ENCODE measurements at regions of chr6 and their contacts with region 1.

Region 1: DNA sequence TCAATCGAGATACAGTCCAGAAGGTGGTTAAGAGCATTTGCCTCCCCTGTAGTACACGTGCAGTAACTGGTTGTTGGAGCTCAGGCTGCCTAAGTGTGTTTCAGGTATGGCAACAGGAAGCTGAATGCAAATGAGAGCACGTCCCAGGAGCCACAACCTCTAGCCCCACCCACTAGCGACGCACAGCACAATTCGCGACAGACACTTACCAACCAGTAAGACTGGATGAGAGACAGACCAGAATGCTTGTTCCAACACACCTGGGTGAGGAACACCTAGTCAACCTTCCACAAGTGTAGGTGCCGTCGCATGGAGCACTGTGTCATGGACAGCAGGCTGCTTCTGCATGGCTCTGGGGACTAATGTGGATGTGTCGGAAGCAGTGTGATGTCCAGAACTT is 7.2 kb upstream of the SERPINB1 start:
- DNase-seq: peak in 1 of 2 donors; percentile 86
- ATAC-seq: no peak
- H3K4me3 ChIP-seq: no peak overlapping the region
- H3K4me3 Mint-ChIP-seq: peak overlapping the region; percentile 9
- H3K27ac ChIP-seq: no peak overlapping the region
- H3K27ac Mint-ChIP-seq: peak overlapping the region in 1 of 2 donors; percentile 37
- H3K4me1 ChIP-seq: peaks cover 18% of the 10 kb centered on the region
- H3K4me1 Mint-ChIP-seq: peaks cover 21 to 31% of the 10 kb centered on the region in 2 donors
- H3K27me3 ChIP-seq: no peaks in the 10 kb centered on the region
- H3K27me3 Mint-ChIP-seq: no peaks in the 10 kb centered on the region
- CTCF ChIP-seq: no peak

Region 2: GRCh38 chr6:2103644-2104523 is 745.0 kb before region 1 on chr6:
- intact Hi-C with region 1: no loop called
- DNase-seq: peak in 1 of 2 donors; percentile 56
- ATAC-seq: peak in 1 of 3 donors; percentile 71
- H3K4me3 ChIP-seq: no peak overlapping the region
- H3K4me3 Mint-ChIP-seq: no peak overlapping the region
- H3K27ac ChIP-seq: no peak overlapping the region
- H3K27ac Mint-ChIP-seq: no peak overlapping the region
- H3K4me1 ChIP-seq: no peaks in the 10 kb centered on the region
- H3K4me1 Mint-ChIP-seq: peaks cover 5% of the 10 kb centered on the region in 2 donors
- H3K27me3 ChIP-seq: no peaks in the 10 kb centered on the region
- H3K27me3 Mint-ChIP-seq: peaks cover 0 to 5% of the 10 kb centered on the region in 2 donors
- CTCF ChIP-seq: peak; percentile 44

Region 3: DNA sequence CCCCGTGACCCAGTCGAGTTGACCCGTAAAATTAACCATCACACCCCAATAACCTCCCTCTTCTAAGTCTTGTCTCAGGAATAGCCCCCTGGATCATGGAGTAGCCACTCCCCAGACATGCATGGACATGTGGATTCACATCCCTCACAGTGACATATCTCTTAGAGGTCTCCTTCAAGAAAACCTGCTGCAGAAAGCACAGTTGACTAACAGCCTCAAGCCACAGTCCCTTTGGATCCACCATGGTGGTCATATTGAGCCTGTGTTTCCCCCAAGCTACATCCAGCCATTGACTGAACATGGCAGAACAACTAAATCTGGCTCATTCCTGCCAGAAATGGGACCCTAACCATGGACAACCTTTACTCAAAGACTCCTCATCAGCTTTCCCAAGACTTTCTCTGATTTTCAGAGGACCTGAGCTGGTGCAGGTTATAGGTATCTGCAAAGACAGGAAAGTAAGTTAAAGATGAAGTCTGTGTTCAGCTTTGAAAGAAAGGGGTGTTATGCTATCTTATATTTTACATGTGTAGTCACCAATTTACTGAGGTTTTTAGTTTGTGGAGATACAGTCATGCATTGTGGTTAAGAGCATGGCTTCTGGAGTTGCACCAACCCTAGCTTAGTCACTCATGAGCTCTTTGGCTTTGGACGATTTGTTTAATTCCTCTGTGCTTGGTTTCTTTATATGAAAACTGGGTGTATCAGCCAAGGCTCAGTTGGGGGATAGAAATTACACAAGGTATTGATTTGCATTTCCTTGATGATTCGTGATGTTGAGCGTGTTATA is 317.2 kb before region 1 on chr6:
- intact Hi-C with region 1: no loop called
- DNase-seq: no peak
- ATAC-seq: no peak
- H3K4me3 ChIP-seq: no peak overlapping the region
- H3K4me3 Mint-ChIP-seq: no peak overlapping the region
- H3K27ac ChIP-seq: no peak overlapping the region
- H3K27ac Mint-ChIP-seq: no peak overlapping the region
- H3K4me1 ChIP-seq: no peaks in the 10 kb centered on the region
- H3K4me1 Mint-ChIP-seq: no peaks in the 10 kb centered on the region
- H3K27me3 ChIP-seq: peaks cover 5% of the 10 kb centered on the region
- H3K27me3 Mint-ChIP-seq: peaks cover 27 to 51% of the 10 kb centered on the region in 2 donors
- CTCF ChIP-seq: no peak

Region 4: GRCh38 chr6:2911171-2911570 is 62.3 kb after region 1 on chr6:
- intact Hi-C with region 1: loop called (anchors 1 kb)
- DNase-seq: no peak
- ATAC-seq: peak in 1 of 3 donors; percentile 47
- H3K4me3 ChIP-seq: no peak overlapping the region
- H3K4me3 Mint-ChIP-seq: no peak overlapping the region
- H3K27ac ChIP-seq: no peak overlapping the region
- H3K27ac Mint-ChIP-seq: no peak overlapping the region
- H3K4me1 ChIP-seq: peaks cover 18% of the 10 kb centered on the region
- H3K4me1 Mint-ChIP-seq: peaks cover 22 to 39% of the 10 kb centered on the region in 2 donors
- H3K27me3 ChIP-seq: no peaks in the 10 kb centered on the region
- H3K27me3 Mint-ChIP-seq: no peaks in the 10 kb centered on the region
- CTCF ChIP-seq: no peak

Region 5: DNA sequence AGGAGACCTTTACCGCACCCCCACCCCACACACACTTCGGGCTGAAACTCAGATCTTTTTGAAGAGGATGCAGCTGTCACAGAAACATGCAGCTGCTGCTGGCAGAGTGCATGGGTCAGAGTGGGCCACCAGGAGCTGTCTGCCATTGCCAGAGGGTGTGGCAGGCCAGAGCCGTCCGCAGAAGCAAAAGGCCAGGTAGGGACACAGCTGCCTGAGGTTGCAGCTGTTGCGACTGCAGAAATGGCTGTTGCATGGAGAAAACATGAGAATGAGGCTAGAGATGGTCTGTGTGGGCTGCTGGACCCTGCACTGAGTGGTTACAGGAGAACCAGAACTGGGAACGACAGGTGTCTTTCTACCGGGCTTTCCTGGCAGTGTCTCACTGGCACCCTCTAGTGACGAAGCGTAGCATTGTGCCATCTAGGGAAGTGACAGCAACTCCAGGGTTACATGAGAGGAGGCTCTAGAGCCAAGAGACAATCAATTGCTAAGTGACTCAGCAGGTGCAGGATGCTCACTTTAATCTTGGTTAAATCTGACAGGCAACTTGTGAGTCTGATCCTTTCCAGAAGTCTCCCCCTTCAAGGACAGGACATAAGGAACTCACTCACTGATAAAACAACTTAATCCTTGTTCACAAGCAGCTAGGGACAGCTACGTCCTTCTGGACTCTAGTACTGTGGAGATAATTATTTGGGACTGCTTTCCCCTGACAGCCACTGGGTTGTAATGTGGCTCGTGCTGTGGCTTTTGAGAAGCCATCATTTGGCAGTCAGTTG is 83.3 kb after region 1 on chr6:
- intact Hi-C with region 1: loop called (anchors 1 kb)
- DNase-seq: peak; percentile 77 to 93
- ATAC-seq: peak; percentile 86 to 95 (median 87)
- H3K4me3 ChIP-seq: no peak overlapping the region
- H3K4me3 Mint-ChIP-seq: peak overlapping the region; percentile 9
- H3K27ac ChIP-seq: no peak overlapping the region
- H3K27ac Mint-ChIP-seq: peak overlapping the region in 1 of 2 donors; percentile 18
- H3K4me1 ChIP-seq: peaks cover 10% of the 10 kb centered on the region
- H3K4me1 Mint-ChIP-seq: peaks cover 21 to 22% of the 10 kb centered on the region in 2 donors
- H3K27me3 ChIP-seq: no peaks in the 10 kb centered on the region
- H3K27me3 Mint-ChIP-seq: no peaks in the 10 kb centered on the region
- CTCF ChIP-seq: peak; percentile 96

Region 6: DNA sequence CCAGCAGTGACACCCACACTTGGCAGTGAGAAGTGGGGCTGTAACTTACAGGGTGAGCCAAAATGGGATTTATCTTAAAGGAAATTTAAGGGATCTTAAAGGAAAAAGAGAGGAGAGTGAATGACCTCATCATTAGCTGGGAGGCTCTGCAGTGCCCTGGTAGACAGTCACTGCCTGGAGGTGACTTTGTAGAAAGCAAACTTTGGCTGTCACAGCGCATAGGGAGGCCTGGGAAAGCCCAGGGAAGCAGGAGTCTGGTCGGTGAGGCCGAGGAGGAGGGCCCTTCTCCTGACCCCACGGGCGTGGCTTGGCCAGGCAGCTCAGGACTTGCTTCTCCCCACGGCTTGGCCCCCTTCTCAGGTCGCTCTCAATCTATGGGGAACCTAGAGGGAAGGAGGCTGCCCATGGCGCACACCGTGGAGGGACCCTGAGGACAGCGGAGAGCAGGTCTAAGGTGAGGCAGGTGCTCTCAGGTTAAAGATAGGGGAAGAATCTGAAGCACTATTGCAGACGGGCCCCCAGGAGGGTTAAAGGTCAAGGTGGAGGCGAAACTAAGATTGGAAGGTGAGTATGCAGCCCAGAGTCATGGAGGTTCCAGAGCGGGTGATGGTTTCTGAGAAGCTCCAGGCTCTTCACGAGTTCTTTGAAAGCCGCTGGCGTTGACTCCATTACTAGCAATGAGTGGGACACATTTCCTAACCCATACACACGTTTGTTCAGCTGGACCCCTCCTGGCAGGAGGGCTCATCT is 203.8 kb after region 1 on chr6:
- intact Hi-C with region 1: loop called (anchors 5 kb)
- DNase-seq: no peak
- ATAC-seq: no peak
- H3K4me3 ChIP-seq: no peak overlapping the region
- H3K4me3 Mint-ChIP-seq: peak overlapping the region; percentile 68
- H3K27ac ChIP-seq: no peak overlapping the region
- H3K27ac Mint-ChIP-seq: peak overlapping the region in 1 of 2 donors; percentile 71
- H3K4me1 ChIP-seq: peaks cover 21% of the 10 kb centered on the region
- H3K4me1 Mint-ChIP-seq: peaks cover 10 to 17% of the 10 kb centered on the region in 2 donors
- H3K27me3 ChIP-seq: no peaks in the 10 kb centered on the region
- H3K27me3 Mint-ChIP-seq: peaks cover 0 to 11% of the 10 kb centered on the region in 2 donors
- CTCF ChIP-seq: no peak